ENCODE measurements at regions of chr4 and their contacts with region 1.

Region 1: GRCh38 chr4:144174401-144175067 is 34.0 kb upstream of the GYPA start:
- DNase-seq: no peak
- ATAC-seq: peak in 3 of 4 donors; percentile 54 to 72 (median 62)
- H3K4me3 ChIP-seq: no peak overlapping the region
- H3K27ac ChIP-seq: no peak overlapping the region
- H3K4me1 ChIP-seq: peaks cover 0 to 3% (median 0%) of the 10 kb centered on the region in 12 donors
- H3K27me3 ChIP-seq: no peaks in the 10 kb centered on the region
- CTCF ChIP-seq: peak; percentile 21 to 63 (median 48)
- POLR2A ChIP-seq: no peak

Region 2: GRCh38 chr4:144787365-144788258 is 613.1 kb after region 1 on chr4:
- intact Hi-C with region 1: loop called in 7 of 10 experiments (anchors 5 to 10 kb)
- DNase-seq: no peak
- ATAC-seq: no peak
- H3K4me3 ChIP-seq: no peak overlapping the region
- H3K27ac ChIP-seq: no peak overlapping the region
- H3K4me1 ChIP-seq: no peaks in the 10 kb centered on the region
- H3K27me3 ChIP-seq: no peaks in the 10 kb centered on the region
- CTCF ChIP-seq: peak; percentile 20 to 62 (median 47)
- POLR2A ChIP-seq: no peak

Region 3: GRCh38 chr4:145061318-145061920 is 886.9 kb after region 1 on chr4:
- intact Hi-C with region 1: loop called in 9 of 10 experiments (anchors 2 to 10 kb)
- DNase-seq: no peak
- ATAC-seq: peak in 2 of 4 donors; percentile 49 to 59
- H3K4me3 ChIP-seq: no peak overlapping the region
- H3K27ac ChIP-seq: no peak overlapping the region
- H3K4me1 ChIP-seq: peaks cover 0 to 8% (median 0%) of the 10 kb centered on the region in 12 donors
- H3K27me3 ChIP-seq: no peaks in the 10 kb centered on the region
- CTCF ChIP-seq: peak; percentile 34 to 66 (median 52)
- POLR2A ChIP-seq: no peak

Region 4: GRCh38 chr4:145097821-145098674 is 923.5 kb after region 1 on chr4 and contains the starts of genes ABCE1 and ANAPC10:
- intact Hi-C with region 1: loop called in 2 of 10 experiments (anchors 10 kb)
- DNase-seq: peak; percentile 95 to 97 (median 96)
- ATAC-seq: peak; percentile 98 to 99 (median 98)
- H3K4me3 ChIP-seq: peak within 1 kb of the TSS; percentile 58 to 82 (median 70)
- H3K27ac ChIP-seq: peak within 1 kb of the TSS; percentile 73 to 95 (median 91)
- H3K4me1 ChIP-seq: peaks cover 3 to 55% (median 33%) of the 10 kb centered on the region in 12 donors
- H3K27me3 ChIP-seq: no peaks in the 10 kb centered on the region
- CTCF ChIP-seq: peak in 9 of 12 donors; percentile 9 to 50 (median 32)
- POLR2A ChIP-seq: peak in 1 of 2 donors; percentile 41
- total RNA-seq, gene ABCE1: 32.0 to 48.9 (median 40.1) TPM
- total RNA-seq, gene ANAPC10: 12.3 to 26.9 (median 13.6) TPM